ENCODE measurements at regions of chr19 and their contacts with region 1.

Region 1: GRCh38 chr19:13952154-13953035 is at the start of gene DCAF15:
- DNase-seq: peak; percentile 99 to 100 (median 100)
- H3K4me3 ChIP-seq: peak within 1 kb of the TSS; percentile 53 to 87 (median 74)
- H3K4me3 Mint-ChIP-seq: peak within 1 kb of the TSS; percentile 82 to 92
- H3K27ac ChIP-seq: peak within 1 kb of the TSS in 1 of 2 donors; percentile 80
- H3K27ac Mint-ChIP-seq: peak within 1 kb of the TSS; percentile 75 to 89 (median 84)
- H3K4me1 ChIP-seq: peaks cover 16 to 21% of the 10 kb centered on the region in 2 donors
- H3K4me1 Mint-ChIP-seq: peaks cover 17% of the 10 kb centered on the region
- H3K27me3 ChIP-seq: no peaks in the 10 kb centered on the region
- H3K27me3 Mint-ChIP-seq: peaks cover 0 to 2% (median 0%) of the 10 kb centered on the region in 3 donors
- CTCF ChIP-seq: no peak
- polyA plus RNA-seq, gene DCAF15: 2.8 to 116 (median 3.4) TPM

Region 2: DNA sequence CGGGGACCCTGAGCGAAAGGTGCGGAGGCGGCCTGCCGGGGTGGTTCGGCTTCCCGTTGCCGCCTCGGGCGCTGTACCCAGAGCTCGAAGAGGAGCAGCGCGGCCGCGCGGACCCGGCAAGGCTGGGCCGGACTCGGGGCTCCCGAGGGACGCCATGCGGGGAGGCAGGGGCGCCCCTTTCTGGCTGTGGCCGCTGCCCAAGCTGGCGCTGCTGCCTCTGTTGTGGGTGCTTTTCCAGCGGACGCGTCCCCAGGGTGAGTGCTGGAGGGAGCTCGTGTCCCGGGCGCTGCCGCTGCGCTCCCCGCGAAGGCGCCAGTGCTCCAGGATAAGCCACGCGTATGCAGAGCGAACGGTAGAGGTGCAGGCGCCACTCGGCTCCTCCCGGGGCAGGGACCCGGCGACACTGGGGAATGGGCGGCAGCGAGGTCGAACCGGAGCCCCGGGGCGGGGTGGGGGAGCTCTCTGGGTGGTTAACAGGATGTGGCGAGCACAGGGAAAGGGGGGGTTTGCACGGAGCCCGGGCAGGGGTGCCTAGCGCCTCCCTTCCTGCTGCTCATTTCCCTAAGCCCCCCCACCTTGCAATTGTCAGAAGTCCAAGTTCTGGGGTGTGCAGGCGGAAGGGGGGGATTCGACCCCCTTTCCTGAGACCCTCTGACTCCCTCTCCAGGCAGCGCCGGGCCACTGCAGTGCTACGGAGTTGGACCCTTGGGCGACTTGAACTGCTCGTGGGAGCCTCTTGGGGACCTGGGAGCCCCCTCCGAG is 79.5 kb after region 1 on chr19 and contains the start of gene IL27RA:
- intact Hi-C with region 1: no loop called
- DNase-seq: peak; percentile 48 to 62 (median 59)
- H3K4me3 ChIP-seq: peak within 1 kb of the TSS; percentile 54 to 98 (median 96)
- H3K4me3 Mint-ChIP-seq: peak within 1 kb of the TSS; percentile 91 to 95
- H3K27ac ChIP-seq: peak within 1 kb of the TSS; percentile 90 to 94
- H3K27ac Mint-ChIP-seq: peak within 1 kb of the TSS; percentile 86 to 96 (median 91)
- H3K4me1 ChIP-seq: peaks cover 23 to 25% of the 10 kb centered on the region in 2 donors
- H3K4me1 Mint-ChIP-seq: peaks cover 28% of the 10 kb centered on the region
- H3K27me3 ChIP-seq: no peaks in the 10 kb centered on the region
- H3K27me3 Mint-ChIP-seq: peaks cover 0 to 3% (median 2%) of the 10 kb centered on the region in 3 donors
- CTCF ChIP-seq: peak; percentile 89
- polyA plus RNA-seq, gene IL27RA: 40.4 to 61.5 (median 54.9) TPM

Region 3: GRCh38 chr19:14048443-14049153 is 96.2 kb after region 1 on chr19:
- intact Hi-C with region 1: loop called in 1 of 2 experiments (anchors 5 kb)
- DNase-seq: peak; percentile 63 to 80 (median 76)
- H3K4me3 ChIP-seq: no peak overlapping the region
- H3K4me3 Mint-ChIP-seq: no peak overlapping the region
- H3K27ac ChIP-seq: no peak overlapping the region
- H3K27ac Mint-ChIP-seq: peak overlapping the region in 3 of 7 donors; percentile 36 to 85 (median 48)
- H3K4me1 ChIP-seq: no peaks in the 10 kb centered on the region
- H3K4me1 Mint-ChIP-seq: peaks cover 11% of the 10 kb centered on the region
- H3K27me3 ChIP-seq: no peaks in the 10 kb centered on the region
- H3K27me3 Mint-ChIP-seq: peaks cover 2 to 4% (median 4%) of the 10 kb centered on the region in 3 donors
- CTCF ChIP-seq: peak; percentile 98